Prostate gland (tissue), 2 donors: ENCODE measurements at regions of chr9 and their contacts with region 1.

Region 1: DNA sequence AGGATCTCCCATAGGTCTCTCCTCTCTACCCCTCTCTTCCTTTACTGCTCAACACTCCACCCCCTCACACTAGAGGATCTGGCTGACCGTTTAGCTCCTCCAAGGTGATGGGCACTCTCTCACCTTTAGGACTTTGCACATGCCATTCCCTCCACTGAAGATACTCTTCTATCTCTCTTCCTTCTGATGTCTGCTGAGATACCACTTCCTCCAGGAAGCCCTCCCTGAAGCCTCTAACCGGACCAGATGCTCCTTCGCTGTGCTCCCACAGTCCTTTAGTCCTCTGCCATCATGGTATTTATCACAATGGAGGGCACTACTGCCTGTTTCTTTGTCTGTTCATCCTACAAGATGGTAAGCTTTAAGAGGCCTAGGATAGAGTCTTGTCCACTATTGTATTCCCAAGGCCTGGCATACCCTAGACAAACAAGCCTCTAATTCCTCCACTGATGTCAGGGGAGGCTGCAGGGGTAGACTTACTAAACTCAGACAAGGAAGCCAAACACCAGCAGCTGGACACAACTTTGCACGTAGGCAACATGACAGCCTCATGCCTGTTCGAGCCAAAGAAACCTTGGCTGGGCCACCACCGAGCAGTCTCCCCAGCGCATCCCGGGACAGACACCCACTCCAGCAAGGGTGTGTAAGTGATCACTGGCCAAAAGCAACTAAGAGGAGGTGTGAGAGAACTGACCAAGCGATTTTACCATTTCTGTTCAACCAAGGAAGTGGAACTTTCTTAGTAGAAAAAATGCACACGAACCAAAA is 20.2 kb downstream of the ORM2 start:
- DNase-seq: no peak
- H3K4me3 ChIP-seq: no peak overlapping the region
- H3K27ac ChIP-seq: no peak overlapping the region
- H3K4me1 ChIP-seq: no peaks in the 10 kb centered on the region
- H3K27me3 ChIP-seq: no peaks in the 10 kb centered on the region
- CTCF ChIP-seq: no peak
- POLR2A ChIP-seq: no peak

Region 2: DNA sequence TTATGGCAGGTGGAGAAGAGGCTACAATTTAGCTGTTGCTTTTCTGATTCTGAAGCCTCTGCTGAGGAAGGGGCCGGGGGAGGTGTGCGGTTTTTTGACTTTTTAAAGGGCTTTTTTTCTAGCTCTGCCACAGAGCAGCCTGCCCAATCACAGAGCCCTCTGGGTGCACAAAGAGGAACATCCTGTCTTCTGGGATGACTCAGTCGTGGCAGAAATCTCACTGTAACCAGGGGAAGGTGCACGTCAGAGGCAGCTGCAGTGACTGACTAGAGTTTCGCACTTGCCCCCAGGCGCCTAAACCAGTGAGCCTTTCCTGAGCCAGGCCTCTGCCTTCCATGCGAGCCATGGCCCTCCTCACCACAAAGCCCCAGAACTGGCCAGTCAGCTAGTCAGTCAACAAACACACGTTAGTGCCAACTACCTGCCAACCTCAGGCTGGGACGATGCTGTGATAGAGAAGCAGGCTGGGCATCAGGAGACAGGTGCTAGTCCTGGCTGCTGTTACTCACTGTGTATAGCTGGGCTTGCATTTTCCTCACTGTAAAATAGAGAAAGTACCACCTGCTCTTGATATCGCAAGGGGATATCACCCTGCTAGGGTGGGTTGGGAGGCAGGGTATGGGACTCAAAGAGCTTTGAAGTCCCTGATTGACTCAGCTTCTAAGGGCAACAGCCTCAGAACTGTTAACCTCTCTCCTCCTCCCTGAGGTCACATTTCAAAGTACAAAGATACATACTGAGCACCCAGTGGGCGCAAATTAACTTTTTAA is 35.7 kb after region 1 on chr9:
- intact Hi-C with region 1: loop called (anchors 5 kb)
- DNase-seq: peak; percentile 44
- H3K4me3 ChIP-seq: peak overlapping the region; percentile 43 to 46
- H3K27ac ChIP-seq: peak overlapping the region; percentile 80 to 86
- H3K4me1 ChIP-seq: peaks cover 13% of the 10 kb centered on the region
- H3K27me3 ChIP-seq: no peaks in the 10 kb centered on the region
- CTCF ChIP-seq: no peak
- POLR2A ChIP-seq: no peak